CD8-positive, alpha-beta memory T cell (primary cell): ENCODE measurements at regions of chr16 and their contacts with region 1.

Region 1: GRCh38 chr16:84672276-84673202 is 24.2 kb downstream of the KLHL36 start:
- DNase-seq: peak; percentile 59 to 85 (median 74)
- H3K4me3 ChIP-seq: no peak overlapping the region
- H3K4me3 Mint-ChIP-seq: no peak overlapping the region
- H3K27ac ChIP-seq: no peak overlapping the region
- H3K27ac Mint-ChIP-seq: peak overlapping the region in 2 of 8 donors; percentile 61 to 89
- H3K4me1 ChIP-seq: no peaks in the 10 kb centered on the region
- H3K4me1 Mint-ChIP-seq: peaks cover 0 to 7% (median 6%) of the 10 kb centered on the region in 3 donors
- H3K27me3 ChIP-seq: no peaks in the 10 kb centered on the region
- H3K27me3 Mint-ChIP-seq: peaks cover 2 to 5% of the 10 kb centered on the region in 2 donors

Region 2: GRCh38 chr16:84699712-84700445 is 27.3 kb after region 1 on chr16 and contains the start of gene USP10:
- CTCF ChIA-PET with region 1: interaction called, 15 read pairs
- POLR2A ChIA-PET with region 1: no interaction called
- DNase-seq: peak; percentile 78 to 89 (median 85)
- H3K4me3 ChIP-seq: peak within 1 kb of the TSS; percentile 74
- H3K4me3 Mint-ChIP-seq: peak within 1 kb of the TSS; percentile 96 to 99 (median 98)
- H3K27ac ChIP-seq: peak within 1 kb of the TSS; percentile 73
- H3K27ac Mint-ChIP-seq: peak within 1 kb of the TSS; percentile 91 to 98 (median 96)
- H3K4me1 ChIP-seq: peaks cover 37% of the 10 kb centered on the region
- H3K4me1 Mint-ChIP-seq: peaks cover 41 to 51% (median 48%) of the 10 kb centered on the region in 3 donors
- H3K27me3 ChIP-seq: no peaks in the 10 kb centered on the region
- H3K27me3 Mint-ChIP-seq: peaks cover 0 to 2% of the 10 kb centered on the region in 2 donors
- total RNA-seq, gene USP10: 143 to 146 TPM

Region 3: DNA sequence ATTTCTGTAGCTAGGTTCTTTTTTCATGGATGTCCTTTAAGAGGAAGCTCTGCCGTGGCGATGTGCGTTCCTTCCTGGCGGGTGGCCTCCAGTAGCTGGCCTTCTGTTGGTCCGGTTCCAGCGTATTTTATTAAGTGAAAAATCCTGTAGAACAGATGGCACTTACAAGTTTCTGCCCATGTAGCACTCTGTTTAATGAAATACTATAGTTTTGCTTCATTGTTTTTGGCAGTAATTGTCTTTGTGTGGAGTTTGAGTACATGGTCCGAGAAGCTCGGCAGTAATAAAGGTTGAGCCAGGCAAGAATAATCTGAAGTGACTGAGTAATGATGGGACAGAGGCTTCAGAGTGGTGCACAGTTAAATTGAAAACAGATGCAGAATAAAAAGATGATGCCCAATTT is 47.6 kb after region 1 on chr16:
- CTCF ChIA-PET with region 1: interaction called, 30 read pairs
- POLR2A ChIA-PET with region 1: no interaction called
- DNase-seq: no peak
- H3K4me3 ChIP-seq: no peak overlapping the region
- H3K4me3 Mint-ChIP-seq: no peak overlapping the region
- H3K27ac ChIP-seq: no peak overlapping the region
- H3K27ac Mint-ChIP-seq: peak overlapping the region in 1 of 8 donors; percentile 34
- H3K4me1 ChIP-seq: peaks cover 28% of the 10 kb centered on the region
- H3K4me1 Mint-ChIP-seq: peaks cover 49 to 82% (median 66%) of the 10 kb centered on the region in 3 donors
- H3K27me3 ChIP-seq: no peaks in the 10 kb centered on the region
- H3K27me3 Mint-ChIP-seq: no peaks in the 10 kb centered on the region

Region 4: DNA sequence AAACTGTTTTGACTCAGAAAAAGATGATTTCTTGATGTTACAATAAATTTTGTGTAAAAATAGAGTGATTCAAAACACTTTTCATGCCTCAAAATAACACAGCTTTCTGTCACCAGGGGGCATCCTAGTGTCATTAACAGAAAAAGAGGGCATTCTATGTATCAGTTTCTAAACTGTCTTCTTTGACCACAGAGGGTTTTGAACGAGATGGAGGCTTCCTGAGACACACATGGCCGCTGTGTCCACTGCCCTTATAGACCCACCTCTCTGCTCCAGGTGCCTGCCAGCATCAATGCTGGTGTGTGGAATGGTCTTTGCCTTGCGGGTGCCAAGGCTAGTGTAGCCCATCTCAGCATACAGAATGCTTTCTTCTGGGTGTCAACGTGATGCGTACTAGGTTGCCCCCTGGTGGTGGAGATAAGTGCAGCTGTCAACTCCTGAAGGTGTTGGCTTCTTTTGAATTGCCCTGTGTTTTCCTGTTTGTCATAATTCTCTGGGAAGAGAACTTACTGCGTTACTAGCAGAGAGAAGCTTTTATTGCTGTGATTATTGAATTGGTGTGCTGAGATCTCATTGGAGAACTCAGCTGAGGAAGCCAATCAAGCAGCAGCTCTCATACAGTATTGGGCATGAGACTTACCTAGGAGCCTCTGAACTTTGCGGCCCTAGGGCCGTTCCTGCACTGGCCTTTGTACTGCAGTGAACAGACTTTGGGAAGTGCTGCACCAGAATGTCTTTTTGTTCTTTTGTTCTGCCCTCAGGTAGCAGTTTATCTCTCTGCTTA is 65.9 kb after region 1 on chr16:
- CTCF ChIA-PET with region 1: interaction called, 12 read pairs
- POLR2A ChIA-PET with region 1: no interaction called
- DNase-seq: peak; percentile 60 to 81 (median 67)
- H3K4me3 ChIP-seq: peak overlapping the region; percentile 44
- H3K4me3 Mint-ChIP-seq: peak overlapping the region in 6 of 7 donors; percentile 60 to 80 (median 75)
- H3K27ac ChIP-seq: no peak overlapping the region
- H3K27ac Mint-ChIP-seq: peak overlapping the region; percentile 1 to 89 (median 64)
- H3K4me1 ChIP-seq: peaks cover 26% of the 10 kb centered on the region
- H3K4me1 Mint-ChIP-seq: peaks cover 31 to 60% (median 51%) of the 10 kb centered on the region in 3 donors
- H3K27me3 ChIP-seq: no peaks in the 10 kb centered on the region
- H3K27me3 Mint-ChIP-seq: peaks cover 0 to 1% of the 10 kb centered on the region in 2 donors